Activated CD4-positive, alpha-beta T cell treated with anti-CD3 and anti-CD28 coated beads for 36 hours (primary cell): ENCODE measurements at regions of chr2 and their contacts with region 1.

Region 1: GRCh38 chr2:231056453-231057424 is at the start of gene PSMD1:
- DNase-seq: peak; percentile 96
- ATAC-seq: peak; percentile 77
- H3K4me3 Mint-ChIP-seq: peak within 1 kb of the TSS; percentile 80
- H3K27ac Mint-ChIP-seq: peak within 1 kb of the TSS; percentile 100
- H3K4me1 Mint-ChIP-seq: peaks cover 51% of the 10 kb centered on the region
- H3K27me3 Mint-ChIP-seq: peaks cover 2% of the 10 kb centered on the region
- total RNA-seq, gene PSMD1: 112 to 160 TPM

Region 2: DNA sequence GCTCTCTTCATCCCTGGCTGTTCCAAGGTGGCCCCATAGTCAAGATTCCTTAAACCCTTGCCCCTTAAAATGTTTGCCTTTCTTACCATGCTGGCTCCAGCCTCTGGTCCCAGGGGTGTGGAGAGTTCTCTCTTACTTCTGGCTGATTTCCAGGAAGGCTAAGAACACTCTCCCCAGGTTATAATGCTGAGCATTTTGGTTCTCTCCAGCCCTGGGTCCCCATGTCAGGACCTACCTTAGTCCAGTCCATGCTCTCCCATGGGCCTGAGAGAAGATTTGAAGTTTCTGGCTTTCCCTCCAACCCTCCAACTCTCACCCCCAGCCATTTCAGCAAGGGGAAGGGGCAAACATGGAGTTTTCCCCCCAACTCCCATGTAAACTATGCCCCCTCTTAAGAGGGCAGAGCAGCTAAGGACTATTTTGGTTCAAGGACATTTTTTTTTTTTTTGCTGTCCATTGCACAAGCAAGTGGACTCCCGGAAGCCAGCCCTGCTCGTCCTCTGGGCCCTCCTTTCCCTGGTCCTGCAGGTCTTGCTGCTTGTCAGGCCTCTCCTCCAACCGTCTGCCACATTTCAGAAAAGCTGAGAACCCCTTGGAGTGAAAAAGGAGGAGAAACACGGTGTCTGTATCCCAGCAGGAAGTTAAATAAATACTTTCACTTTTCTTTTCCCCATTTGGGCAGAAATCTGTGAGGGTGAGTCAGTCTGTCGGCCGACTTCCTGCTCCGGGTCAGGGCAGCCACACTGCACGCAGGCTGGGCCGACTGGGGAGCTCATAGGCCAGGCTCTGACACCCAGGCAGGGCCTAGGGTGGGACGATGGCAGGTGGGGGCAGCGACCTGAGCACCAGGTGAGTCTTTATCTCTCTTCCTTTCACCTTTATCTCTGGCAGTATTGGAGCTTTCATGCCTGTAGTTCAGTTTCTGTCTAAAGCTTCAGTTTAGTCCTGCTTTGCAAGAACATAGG is 730.0 kb before region 1 on chr2 and contains the start of gene SP140L:
- CTCF ChIA-PET with region 1: no interaction called
- POLR2A ChIA-PET with region 1: no interaction called
- intact Hi-C with region 1: loop called in 1 of 2 experiments (anchors 1 kb)
- DNase-seq: peak; percentile 89
- ATAC-seq: peak; percentile 97
- H3K4me3 Mint-ChIP-seq: peak within 1 kb of the TSS; percentile 89
- H3K27ac Mint-ChIP-seq: peak within 1 kb of the TSS; percentile 98
- H3K4me1 Mint-ChIP-seq: peaks cover 61% of the 10 kb centered on the region
- H3K27me3 Mint-ChIP-seq: no peaks in the 10 kb centered on the region
- total RNA-seq, gene SP140L: 40.1 to 43.4 TPM

Region 3: GRCh38 chr2:230400454-230400853 is 656.3 kb before region 1 on chr2:
- CTCF ChIA-PET with region 1: no interaction called
- POLR2A ChIA-PET with region 1: no interaction called
- intact Hi-C with region 1: no loop called
- DNase-seq: no peak
- ATAC-seq: no peak
- H3K4me3 Mint-ChIP-seq: no peak overlapping the region
- H3K27ac Mint-ChIP-seq: no peak overlapping the region
- H3K4me1 Mint-ChIP-seq: no peaks in the 10 kb centered on the region
- H3K27me3 Mint-ChIP-seq: no peaks in the 10 kb centered on the region

Region 4: DNA sequence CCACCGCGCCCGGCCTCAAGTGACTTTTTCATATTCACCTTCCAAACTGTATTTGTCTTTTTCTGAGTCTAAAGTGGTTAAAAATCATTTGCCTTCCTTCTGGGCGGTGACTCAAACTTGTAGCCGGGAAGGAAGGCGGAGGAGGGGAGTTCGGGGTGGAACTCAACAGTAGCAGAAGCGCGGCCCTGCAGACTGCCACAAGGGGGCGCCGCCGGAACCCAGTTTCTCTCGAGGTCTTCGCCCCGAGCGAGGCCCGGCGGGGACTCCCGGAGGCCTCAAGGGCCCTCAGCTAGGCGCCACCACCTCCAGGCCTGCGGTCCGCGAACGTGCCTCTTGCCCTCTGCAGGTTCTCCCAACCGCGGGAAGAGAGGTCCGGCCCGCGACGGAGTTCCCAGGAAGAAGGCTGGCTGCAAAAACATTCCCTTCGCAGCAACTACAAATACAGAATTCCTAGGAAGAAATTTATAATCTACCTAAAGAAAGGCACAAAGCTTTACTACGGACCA is 208.8 kb before region 1 on chr2:
- CTCF ChIA-PET with region 1: interaction called, 3 read pairs
- POLR2A ChIA-PET with region 1: no interaction called
- intact Hi-C with region 1: loop called in 1 of 2 experiments (anchors 1 kb)
- DNase-seq: peak; percentile 98
- ATAC-seq: peak; percentile 97
- H3K4me3 Mint-ChIP-seq: no peak overlapping the region
- H3K27ac Mint-ChIP-seq: peak overlapping the region; percentile 47
- H3K4me1 Mint-ChIP-seq: peaks cover 18% of the 10 kb centered on the region
- H3K27me3 Mint-ChIP-seq: peaks cover 19% of the 10 kb centered on the region

Region 5: GRCh38 chr2:230924470-230925341 is 132.0 kb before region 1 on chr2 and contains the start of gene GPR55:
- CTCF ChIA-PET with region 1: interaction called, 3 read pairs
- POLR2A ChIA-PET with region 1: no interaction called
- intact Hi-C with region 1: loop called in 1 of 2 experiments (anchors 5 kb)
- DNase-seq: peak; percentile 90
- ATAC-seq: peak; percentile 69
- H3K4me3 Mint-ChIP-seq: peak within 1 kb of the TSS; percentile 76
- H3K27ac Mint-ChIP-seq: peak within 1 kb of the TSS; percentile 95
- H3K4me1 Mint-ChIP-seq: peaks cover 66% of the 10 kb centered on the region
- H3K27me3 Mint-ChIP-seq: peaks cover 4% of the 10 kb centered on the region
- total RNA-seq, gene GPR55: 3.6 to 4.0 TPM

Region 6: DNA sequence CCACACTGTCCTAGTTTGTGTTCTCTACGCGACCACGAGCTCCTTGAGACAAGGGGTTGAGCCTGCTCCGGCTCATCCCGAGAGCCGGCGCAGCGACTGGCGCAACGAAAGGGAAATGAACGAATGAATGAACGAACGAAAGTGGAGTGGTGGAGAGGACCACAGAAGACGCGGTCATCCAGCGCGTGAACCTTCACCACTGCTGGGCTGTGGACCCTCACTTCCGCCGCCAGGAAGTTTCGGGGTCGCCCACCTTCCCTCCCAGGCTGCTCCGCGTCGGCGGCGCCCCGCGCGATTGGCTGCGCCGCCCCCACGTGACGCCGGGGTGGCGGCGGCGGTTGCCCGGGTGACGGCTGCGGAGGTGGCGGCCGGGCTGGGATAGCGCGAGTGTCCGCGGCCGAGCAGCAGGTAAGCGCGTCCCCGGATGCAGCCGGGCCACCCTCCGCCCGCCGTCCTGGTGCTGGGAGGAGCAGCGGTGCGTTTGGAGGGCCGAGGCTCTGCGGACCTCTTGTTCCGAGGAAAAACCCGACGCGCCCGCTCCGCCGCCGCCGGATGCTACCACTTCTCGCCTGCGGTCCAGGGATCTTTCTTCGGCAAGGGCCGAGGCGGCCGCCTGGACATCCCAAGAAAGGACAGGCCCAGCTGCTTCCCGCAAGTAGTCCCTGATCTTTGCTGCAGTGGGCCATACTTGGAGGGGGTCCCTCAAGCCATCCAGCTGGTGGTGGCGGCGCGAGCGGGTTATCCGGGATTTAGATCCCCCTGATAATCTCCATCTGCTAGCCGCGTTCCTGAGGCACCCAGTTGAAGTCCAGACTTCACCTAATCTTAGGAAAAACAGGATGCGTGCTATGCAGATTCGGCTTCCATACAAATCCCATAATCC is 141.8 kb after region 1 on chr2 and contains the start of gene ARMC9:
- CTCF ChIA-PET with region 1: interaction called, 4 read pairs
- POLR2A ChIA-PET with region 1: no interaction called
- intact Hi-C with region 1: loop called in 1 of 2 experiments (anchors 1 kb)
- DNase-seq: peak; percentile 84
- ATAC-seq: peak; percentile 98
- H3K4me3 Mint-ChIP-seq: peak within 1 kb of the TSS; percentile 89
- H3K27ac Mint-ChIP-seq: peak within 1 kb of the TSS; percentile 74
- H3K4me1 Mint-ChIP-seq: peaks cover 7% of the 10 kb centered on the region
- H3K27me3 Mint-ChIP-seq: peaks cover 9% of the 10 kb centered on the region
- total RNA-seq, gene ARMC9: 2.3 to 2.5 TPM

Region 7: GRCh38 chr2:231612179-231613053 is 555.7 kb after region 1 on chr2:
- CTCF ChIA-PET with region 1: no interaction called
- POLR2A ChIA-PET with region 1: no interaction called
- intact Hi-C with region 1: loop called in 1 of 2 experiments (anchors 2 kb)
- DNase-seq: peak; percentile 99
- ATAC-seq: peak; percentile 67
- H3K4me3 Mint-ChIP-seq: peak overlapping the region; percentile 77
- H3K27ac Mint-ChIP-seq: peak overlapping the region; percentile 98
- H3K4me1 Mint-ChIP-seq: peaks cover 52% of the 10 kb centered on the region
- H3K27me3 Mint-ChIP-seq: no peaks in the 10 kb centered on the region